PC-3 (cell line): ENCODE measurements at regions of chr18 and their contacts with region 1.

Region 1: GRCh38 chr18:158128-159036 is at the start of gene USP14:
- DNase-seq: peak; percentile 95
- ATAC-seq: peak; percentile 89
- H3K4me3 ChIP-seq: peak within 1 kb of the TSS; percentile 99
- H3K27ac ChIP-seq: peak within 1 kb of the TSS; percentile 59
- H3K4me1 ChIP-seq: peaks cover 28% of the 10 kb centered on the region
- H3K27me3 ChIP-seq: no peaks in the 10 kb centered on the region
- CTCF ChIP-seq: no peak
- total RNA-seq, gene USP14: 30.7 and 31.9 TPM in 2 replicates

Region 2: DNA sequence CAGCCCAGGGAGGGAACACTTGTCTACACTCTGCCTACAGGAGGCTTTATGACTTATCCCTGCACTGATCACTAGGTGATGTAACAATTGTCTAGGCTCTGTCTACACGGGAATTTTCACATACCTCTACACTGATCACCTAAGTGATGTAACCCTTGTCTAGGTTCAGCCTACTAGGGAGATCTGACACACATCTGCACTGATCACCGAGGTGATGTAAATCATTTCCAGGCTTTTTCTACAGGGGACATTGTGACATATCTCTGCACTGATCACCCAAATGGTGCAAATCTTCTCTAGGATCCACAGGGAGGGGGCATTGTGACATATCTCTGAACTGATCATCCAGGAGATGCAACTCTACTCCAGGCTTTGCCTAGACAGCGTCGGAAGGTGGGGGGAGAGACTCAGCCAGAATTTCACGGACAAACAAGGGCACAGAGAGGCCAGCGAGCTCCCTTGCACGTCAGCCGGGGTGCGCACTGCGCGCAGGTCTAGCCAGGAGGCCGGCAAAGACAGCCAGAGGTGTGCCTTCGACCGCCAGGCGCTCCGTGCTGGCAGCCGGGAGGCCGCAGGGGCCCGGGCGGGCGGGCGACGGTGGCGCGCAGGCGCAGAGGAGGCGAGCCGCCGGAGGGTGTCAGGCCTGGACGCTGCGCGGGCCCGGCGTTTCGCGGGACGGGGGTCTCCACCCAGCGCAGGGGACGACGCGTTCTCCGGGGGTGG is 46.9 kb before region 1 on chr18:
- CTCF ChIA-PET with region 1: no interaction called
- POLR2A ChIA-PET with region 1: no interaction called
- intact Hi-C with region 1: loop called (anchors 5 kb)
- DNase-seq: peak; percentile 77
- ATAC-seq: peak; percentile 74
- H3K4me3 ChIP-seq: peak overlapping the region; percentile 60
- H3K27ac ChIP-seq: no peak overlapping the region; the same call in 1 of the 2 replicates
- H3K4me1 ChIP-seq: peaks cover 4% of the 10 kb centered on the region; the same call in 1 of the 2 replicates
- H3K27me3 ChIP-seq: no peaks in the 10 kb centered on the region
- CTCF ChIP-seq: no peak

Region 3: DNA sequence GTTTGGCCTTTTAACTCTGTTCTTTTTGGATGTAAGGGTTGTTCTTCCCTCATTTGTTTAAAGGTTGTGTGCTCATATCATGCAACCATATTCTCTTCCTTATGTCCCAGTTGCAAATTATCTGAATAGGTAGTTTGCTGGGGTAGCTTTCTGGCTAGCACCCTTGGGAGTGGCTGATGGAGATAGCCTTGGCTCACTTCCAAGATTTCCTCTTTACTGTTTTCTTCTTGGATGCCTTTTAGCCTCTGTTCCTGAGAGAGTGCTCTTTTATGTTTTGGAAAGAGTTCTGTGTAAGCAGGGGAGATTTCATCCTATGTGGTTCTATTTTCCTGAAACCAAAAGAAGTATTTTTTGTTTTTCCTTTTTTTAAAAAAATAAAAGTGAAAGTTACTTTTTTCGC is 25.4 kb after region 1 on chr18:
- CTCF ChIA-PET with region 1: no interaction called
- POLR2A ChIA-PET with region 1: no interaction called
- intact Hi-C with region 1: loop called (anchors 2 kb)
- DNase-seq: no peak
- ATAC-seq: no peak
- H3K4me3 ChIP-seq: no peak overlapping the region
- H3K27ac ChIP-seq: no peak overlapping the region
- H3K4me1 ChIP-seq: no peaks in the 10 kb centered on the region
- H3K27me3 ChIP-seq: no peaks in the 10 kb centered on the region
- CTCF ChIP-seq: no peak

Region 4: DNA sequence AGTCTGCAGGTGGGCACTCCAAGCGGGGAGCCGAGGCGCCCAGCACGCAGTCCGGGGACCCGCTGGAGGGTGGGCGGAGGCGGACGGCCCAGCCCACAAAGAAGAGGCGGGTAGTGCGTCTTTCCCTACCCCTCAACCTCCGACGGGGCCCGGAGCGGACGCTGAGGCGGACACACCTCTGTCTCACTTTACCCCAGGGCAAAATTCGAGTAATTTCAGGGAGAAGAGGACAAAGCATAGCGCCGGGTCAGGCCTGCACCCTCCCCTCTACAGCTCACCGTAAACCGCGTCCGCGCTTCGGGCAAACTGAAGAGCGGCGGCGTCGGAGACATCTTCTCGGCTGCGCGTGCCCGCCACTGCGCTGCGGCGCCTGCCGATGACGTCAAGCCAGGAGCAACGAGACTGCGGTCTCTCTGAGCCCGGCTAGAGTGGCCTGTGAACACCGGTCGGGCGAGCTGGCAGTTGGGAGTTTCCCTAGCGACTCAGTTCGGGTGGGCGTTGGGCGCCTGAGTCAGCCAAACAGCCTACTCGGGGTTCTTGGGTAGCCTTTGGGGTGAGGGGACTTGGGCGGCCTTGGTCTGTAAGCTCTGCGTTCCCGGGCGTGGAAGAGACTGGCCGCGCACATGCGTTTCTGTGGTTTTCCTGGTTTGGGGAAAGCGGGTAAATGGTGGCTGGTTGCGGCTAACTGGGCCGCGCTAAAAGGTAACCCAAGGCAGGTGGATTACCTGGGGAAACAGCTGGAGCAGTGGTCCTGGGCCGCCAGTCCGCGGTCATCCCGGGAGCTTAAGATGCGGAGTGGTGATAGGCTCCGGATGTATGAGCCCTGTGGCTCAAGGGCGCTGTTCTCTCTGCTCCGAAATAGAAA is 109.5 kb after region 1 on chr18 and contains the start of gene THOC1:
- CTCF ChIA-PET with region 1: no interaction called
- POLR2A ChIA-PET with region 1: no interaction called
- intact Hi-C with region 1: loop called (anchors 2 kb)
- DNase-seq: peak; percentile 94
- ATAC-seq: peak; percentile 93
- H3K4me3 ChIP-seq: peak within 1 kb of the TSS; percentile 92
- H3K27ac ChIP-seq: peak within 1 kb of the TSS; percentile 78
- H3K4me1 ChIP-seq: peaks cover 12% of the 10 kb centered on the region
- H3K27me3 ChIP-seq: no peaks in the 10 kb centered on the region
- CTCF ChIP-seq: no peak
- total RNA-seq, gene THOC1: 29.4 and 43.5 TPM in 2 replicates